Left ventricle myocardium superior (tissue), 1 donor: ENCODE measurements at regions of chr1 and their contacts with region 1.

Region 1: DNA sequence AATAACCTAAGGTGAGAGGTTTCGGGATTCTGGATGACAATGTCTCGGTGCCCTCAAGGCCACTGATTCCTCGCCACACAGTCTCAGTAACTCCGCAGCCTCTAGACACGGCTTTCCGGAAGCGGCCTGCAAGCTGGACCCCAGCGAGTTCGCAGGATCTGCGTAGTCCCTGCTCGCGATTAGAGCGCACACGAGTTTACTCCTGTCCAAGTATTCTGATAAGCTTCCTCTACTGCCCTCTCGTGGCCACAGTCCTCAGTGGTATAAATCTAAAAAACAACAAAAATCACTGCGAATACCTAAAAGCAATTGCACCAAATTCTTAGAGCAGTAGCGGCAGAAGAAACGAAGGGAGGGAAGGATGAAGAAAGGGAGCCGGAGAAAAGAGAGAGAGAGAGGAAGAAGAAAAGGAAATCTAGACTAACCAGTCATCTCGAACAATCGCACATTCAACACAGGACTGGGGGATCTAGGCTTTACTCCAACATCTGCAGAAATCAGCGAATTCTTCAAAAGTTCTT is 1.1 kb upstream of the PLXNA2 start:
- DNase-seq: peak; percentile 91
- ATAC-seq: peak; percentile 74

Region 2: GRCh38 chr1:207779008-207779407 is 466.2 kb before region 1 on chr1:
- intact Hi-C with region 1: no loop called
- DNase-seq: no peak
- ATAC-seq: no peak

Region 3: GRCh38 chr1:208029381-208030287 is 215.6 kb before region 1 on chr1:
- intact Hi-C with region 1: loop called (anchors 10 kb)
- DNase-seq: no peak
- ATAC-seq: peak; percentile 75

Region 4: GRCh38 chr1:208132287-208132883 is 112.9 kb before region 1 on chr1:
- intact Hi-C with region 1: loop called (anchors 10 kb)
- DNase-seq: peak; percentile 90
- ATAC-seq: peak; percentile 90